ENCODE measurements at regions of chr14 and their contacts with region 1.

Region 1: DNA sequence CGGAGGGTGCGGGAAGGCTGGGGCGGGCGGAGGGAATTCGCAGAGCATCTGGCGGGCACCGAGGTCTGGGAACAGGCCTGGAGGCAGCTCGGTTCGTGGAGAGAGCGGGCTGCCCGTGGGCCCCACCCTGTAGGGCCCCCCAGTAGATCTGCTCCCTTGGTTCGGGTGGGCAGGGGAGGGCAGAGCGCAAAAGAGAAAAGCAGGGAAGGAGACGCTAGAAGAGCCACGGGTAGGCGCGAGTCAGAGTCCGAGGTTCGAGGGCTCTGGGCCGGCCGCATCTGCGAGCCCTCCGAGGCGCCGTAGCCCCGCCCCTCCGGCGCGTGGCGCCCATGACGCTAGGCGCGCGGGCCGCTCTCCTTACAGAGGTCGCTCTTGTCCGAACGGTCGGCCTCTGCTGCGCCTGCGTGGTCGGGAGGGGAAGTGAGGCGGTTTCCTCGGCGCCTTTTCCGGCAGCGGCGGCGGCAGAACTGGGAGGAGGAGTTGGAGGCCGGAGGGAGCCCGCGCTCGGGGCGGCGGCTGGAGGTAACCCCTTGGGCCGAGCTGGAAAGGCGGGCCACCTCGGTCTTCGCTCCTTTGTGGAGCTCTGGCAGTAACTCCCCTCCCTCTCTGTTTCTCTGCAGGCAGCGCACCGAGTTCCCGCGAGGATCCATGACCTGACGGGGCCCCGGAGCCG is at the start of gene ARF6:
- DNase-seq: peak; percentile 87 to 97
- H3K4me3 ChIP-seq: peak within 1 kb of the TSS; percentile 99
- H3K27ac ChIP-seq: peak within 1 kb of the TSS; percentile 96
- H3K4me1 ChIP-seq: peaks cover 28% of the 10 kb centered on the region
- H3K27me3 ChIP-seq: no peaks in the 10 kb centered on the region
- CTCF ChIP-seq: no peak; the same call in 1 of the 2 replicates
- total RNA-seq, gene ARF6: 46.8 and 65.3 TPM in 2 replicates

Region 2: GRCh38 chr14:49920935-49921334 is 28.2 kb after region 1 on chr14:
- CTCF ChIA-PET with region 1: no interaction called
- POLR2A ChIA-PET with region 1: no interaction called
- intact Hi-C with region 1: no loop called
- DNase-seq: no peak
- H3K4me3 ChIP-seq: no peak overlapping the region
- H3K27ac ChIP-seq: no peak overlapping the region
- H3K4me1 ChIP-seq: 0 out of 2 replicates have a peak, but pooled peaks cover 6% of the 10 kb centered on the region
- H3K27me3 ChIP-seq: no peaks in the 10 kb centered on the region
- CTCF ChIP-seq: no peak

Region 3: GRCh38 chr14:49971156-49972130 is 78.7 kb after region 1 on chr14:
- CTCF ChIA-PET with region 1: interaction called, 3 read pairs
- POLR2A ChIA-PET with region 1: interaction called, 19 read pairs
- intact Hi-C with region 1: loop called (anchors 1 kb)
- DNase-seq: no peak
- H3K4me3 ChIP-seq: peak overlapping the region; percentile 40; the same call in 1 of the 2 replicates
- H3K27ac ChIP-seq: peak overlapping the region; percentile 97
- H3K4me1 ChIP-seq: peaks cover 81% of the 10 kb centered on the region
- H3K27me3 ChIP-seq: no peaks in the 10 kb centered on the region
- CTCF ChIP-seq: no peak

Region 4: DNA sequence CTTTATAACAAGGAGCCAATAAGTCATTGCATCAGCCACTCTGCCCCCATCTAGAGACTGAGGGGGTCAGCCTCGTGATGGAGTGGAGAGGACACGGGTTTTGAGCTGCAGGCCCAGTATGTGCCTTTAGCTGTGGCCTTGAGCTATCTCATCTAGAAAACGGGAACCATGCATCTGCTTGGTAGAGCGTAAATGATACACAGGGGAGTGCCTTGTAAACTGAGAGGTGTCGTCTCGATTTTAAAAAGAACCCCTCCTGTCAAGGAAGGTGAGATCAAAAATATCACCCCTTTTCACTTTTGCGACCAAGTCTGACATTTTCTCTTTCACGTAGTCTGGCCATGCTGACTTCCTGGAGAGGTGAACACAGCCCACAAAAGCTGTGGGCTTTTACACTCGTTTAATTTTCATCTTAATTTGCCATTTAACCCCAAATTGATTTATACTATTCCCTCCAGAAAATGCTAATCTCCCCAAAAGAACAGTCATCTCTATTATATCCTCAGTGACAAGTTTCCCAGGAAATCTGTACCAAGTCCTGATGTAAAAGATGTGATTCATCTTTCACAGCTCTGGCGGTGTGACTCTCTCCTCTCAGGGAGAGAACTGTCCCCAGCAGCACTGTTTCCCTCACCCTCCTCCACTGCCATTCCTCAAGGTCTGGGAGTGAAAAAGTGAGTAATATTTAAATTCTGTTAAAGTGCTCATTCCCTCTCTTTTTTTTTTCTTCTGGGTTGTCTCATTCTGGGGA is 193.0 kb after region 1 on chr14:
- CTCF ChIA-PET with region 1: no interaction called
- POLR2A ChIA-PET with region 1: no interaction called
- intact Hi-C with region 1: no loop called
- DNase-seq: no peak
- H3K4me3 ChIP-seq: no peak overlapping the region
- H3K27ac ChIP-seq: no peak overlapping the region
- H3K4me1 ChIP-seq: no peaks in the 10 kb centered on the region; the same call in 1 of the 2 replicates
- H3K27me3 ChIP-seq: no peaks in the 10 kb centered on the region
- CTCF ChIP-seq: no peak

Measured in PC-9 (cell line).